Activated T-helper 1 cell treated with anti-CD3 and anti-CD28 coated beads, Interleukin-12 subunit alpha, Interleukin-12 subunit beta, Interleukin-2, Interleukin-4 antibody, amounts not matched to agents 30 ng/mL and 10 ng/mL and 1 ng/mL, durations not matched to agents 14 hours and 24 hours and 36 hours (primary cell): ENCODE measurements at regions of chr22 and their contacts with region 1.

Region 1: GRCh38 chr22:26428515-26429457 is at the start of gene ASPHD2:
- DNase-seq: peak; percentile 77
- H3K4me3 Mint-ChIP-seq: peak within 1 kb of the TSS; percentile 97
- H3K27ac Mint-ChIP-seq: peak within 1 kb of the TSS; percentile 97
- H3K4me1 Mint-ChIP-seq: peaks cover 54% of the 10 kb centered on the region
- H3K27me3 Mint-ChIP-seq: peaks cover 21% of the 10 kb centered on the region
- total RNA-seq, gene ASPHD2: 23.4 and 23.5 TPM in 2 replicates

Region 2: DNA sequence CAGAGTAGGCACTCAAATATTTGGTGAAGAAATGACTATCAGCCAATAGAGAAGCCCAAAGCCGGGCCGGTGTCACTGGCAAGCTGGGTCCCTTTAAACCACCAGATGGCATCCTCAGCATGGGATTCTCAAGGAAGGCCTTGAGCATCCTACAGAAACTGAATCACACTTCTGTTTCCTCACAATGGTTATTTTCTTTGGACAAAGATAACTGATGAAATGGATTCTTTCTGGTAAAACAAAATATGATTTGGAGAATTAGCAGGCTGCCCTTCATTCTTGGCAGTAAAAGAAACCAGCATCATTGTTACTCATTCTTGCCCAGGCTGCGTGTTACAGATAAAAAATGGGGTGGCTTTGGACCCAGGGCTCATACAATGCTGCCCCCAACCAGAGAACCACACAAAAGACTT is 30.0 kb before region 1 on chr22:
- intact Hi-C with region 1: loop called (anchors 1 kb)
- DNase-seq: peak; percentile 29
- H3K4me3 Mint-ChIP-seq: no peak overlapping the region
- H3K27ac Mint-ChIP-seq: no peak overlapping the region
- H3K4me1 Mint-ChIP-seq: peaks cover 10% of the 10 kb centered on the region
- H3K27me3 Mint-ChIP-seq: peaks cover 4% of the 10 kb centered on the region

Region 3: DNA sequence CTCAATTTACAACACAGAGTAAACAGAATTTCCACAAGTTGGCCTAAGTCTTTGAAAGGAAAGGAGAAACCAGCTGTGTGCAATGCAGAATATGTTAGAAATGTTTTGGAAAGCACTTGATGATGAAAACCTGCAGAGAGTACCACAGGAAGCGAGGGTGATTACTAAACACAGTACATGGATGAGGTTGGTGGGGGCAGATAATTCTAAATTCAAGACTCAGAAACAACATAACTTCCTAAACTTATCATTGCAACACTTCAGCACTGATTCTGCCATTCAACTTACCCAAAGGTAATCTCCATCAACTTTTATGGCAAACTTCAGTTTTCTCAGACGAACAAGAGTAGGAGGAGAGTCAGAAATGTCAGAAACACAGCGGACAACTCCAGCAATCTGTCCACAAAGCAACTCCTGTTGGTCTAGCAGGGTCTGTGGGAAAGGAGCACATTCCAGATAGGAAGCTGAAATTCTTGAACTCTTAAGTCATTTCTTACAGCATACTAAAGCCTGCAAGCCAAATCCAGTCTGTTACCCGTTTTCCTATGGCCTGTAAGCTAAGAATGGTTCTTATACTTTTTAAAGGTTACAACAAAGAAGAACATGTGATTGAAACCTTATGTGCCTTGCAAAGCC is 48.0 kb after region 1 on chr22:
- intact Hi-C with region 1: loop called (anchors 1 kb)
- DNase-seq: no peak
- H3K4me3 Mint-ChIP-seq: peak overlapping the region; percentile 43
- H3K27ac Mint-ChIP-seq: peak overlapping the region; percentile 82
- H3K4me1 Mint-ChIP-seq: peaks cover 56% of the 10 kb centered on the region
- H3K27me3 Mint-ChIP-seq: no peaks in the 10 kb centered on the region

Region 4: DNA sequence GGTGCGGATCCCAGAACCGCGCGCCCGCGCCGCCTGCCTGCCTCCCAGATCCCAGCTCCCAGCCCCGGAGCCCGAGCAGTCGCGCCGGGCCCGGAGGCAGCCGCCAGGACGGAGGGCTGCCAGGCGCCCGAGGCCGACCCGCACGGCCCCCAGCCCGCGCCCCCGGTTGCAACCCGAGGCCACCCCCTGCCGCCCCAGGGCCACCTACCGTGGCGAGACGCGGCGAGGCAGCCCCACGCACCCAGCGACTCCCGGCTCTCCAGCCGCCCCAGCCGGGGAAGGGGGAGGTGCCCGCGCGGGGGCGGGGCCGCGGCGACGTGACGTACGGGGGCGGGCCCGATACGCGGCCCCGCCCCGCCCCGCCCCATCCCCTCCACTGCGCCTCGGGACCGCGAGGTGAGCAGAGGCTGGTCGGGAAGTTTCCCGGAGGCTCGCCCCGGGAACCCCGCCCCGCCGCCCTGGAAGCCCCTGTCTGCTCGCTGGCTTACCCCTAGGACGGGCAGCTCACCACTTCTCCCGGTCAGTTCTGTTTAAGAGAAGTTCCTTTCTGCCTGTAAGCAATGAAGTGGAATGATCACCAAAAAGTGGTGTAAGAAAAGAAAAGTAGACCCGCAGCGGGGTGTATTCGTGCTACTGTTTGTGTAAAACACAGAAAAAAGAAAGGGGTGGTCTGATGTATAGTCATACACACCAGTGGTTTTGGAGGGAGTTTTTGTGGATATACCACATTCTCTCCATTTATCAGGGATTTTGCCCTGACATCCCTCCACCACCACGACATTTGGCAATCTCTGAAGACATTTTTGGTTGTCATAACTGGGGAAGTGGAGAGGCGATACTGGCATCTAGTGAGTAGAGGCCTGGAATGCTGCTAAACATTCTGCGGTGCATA is 161.3 kb after region 1 on chr22 and contains the start of gene TPST2:
- intact Hi-C with region 1: loop called (anchors 1 kb)
- DNase-seq: peak; percentile 74
- H3K4me3 Mint-ChIP-seq: peak within 1 kb of the TSS; percentile 95
- H3K27ac Mint-ChIP-seq: peak within 1 kb of the TSS; percentile 94
- H3K4me1 Mint-ChIP-seq: peaks cover 79% of the 10 kb centered on the region
- H3K27me3 Mint-ChIP-seq: no peaks in the 10 kb centered on the region
- total RNA-seq, gene TPST2: 36.1 and 37.0 TPM in 2 replicates

Region 5: DNA sequence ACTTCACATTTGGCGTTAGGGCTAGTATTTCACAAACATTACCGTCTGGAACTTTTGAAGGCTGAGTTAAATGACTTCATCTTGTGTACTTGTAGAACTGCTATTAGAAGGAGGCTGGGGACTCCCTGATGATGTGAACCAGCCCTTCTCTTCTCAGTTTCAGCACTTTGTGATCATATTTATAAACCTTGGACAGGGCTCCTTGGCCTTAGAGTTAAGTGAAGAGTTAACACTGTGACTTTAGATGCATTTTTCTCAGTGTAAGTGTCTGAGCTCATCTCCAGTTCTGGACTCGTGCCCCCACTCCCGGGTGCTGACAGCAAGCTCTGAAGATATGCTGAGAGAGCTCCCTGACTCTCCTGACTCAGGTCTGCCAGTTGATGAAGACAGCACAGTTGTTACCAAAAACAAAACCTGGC is 237.0 kb after region 1 on chr22:
- intact Hi-C with region 1: loop called (anchors 2 kb)
- DNase-seq: no peak
- H3K4me3 Mint-ChIP-seq: peak overlapping the region; percentile 75
- H3K27ac Mint-ChIP-seq: peak overlapping the region; percentile 96
- H3K4me1 Mint-ChIP-seq: peaks cover 76% of the 10 kb centered on the region
- H3K27me3 Mint-ChIP-seq: no peaks in the 10 kb centered on the region